ENCODE measurements at regions of chr6 and their contacts with region 1.

Region 1: GRCh38 chr6:44456070-44456965 is 68.8 kb downstream of the CDC5L start:
- DNase-seq: no peak
- ATAC-seq: peak; percentile 77
- H3K4me3 Mint-ChIP-seq: no peak overlapping the region
- H3K27ac Mint-ChIP-seq: no peak overlapping the region
- H3K4me1 Mint-ChIP-seq: no peaks in the 10 kb centered on the region
- H3K27me3 Mint-ChIP-seq: peaks cover 3% of the 10 kb centered on the region
- CTCF ChIP-seq: peak; percentile 93

Region 2: GRCh38 chr6:44431118-44431725 is 25.1 kb before region 1 on chr6:
- CTCF ChIA-PET with region 1: interaction called, 11 read pairs
- POLR2A ChIA-PET with region 1: no interaction called
- intact Hi-C with region 1: loop called (anchors 1 kb)
- DNase-seq: no peak
- ATAC-seq: peak; percentile 47
- H3K4me3 Mint-ChIP-seq: no peak overlapping the region
- H3K27ac Mint-ChIP-seq: no peak overlapping the region
- H3K4me1 Mint-ChIP-seq: no peaks in the 10 kb centered on the region
- H3K27me3 Mint-ChIP-seq: no peaks in the 10 kb centered on the region
- CTCF ChIP-seq: no peak